ENCODE measurements at regions of chr12 and their contacts with region 1.

Region 1: GRCh38 chr12:59113831-59114615 is 193.7 kb upstream of the LRIG3 start:
- DNase-seq: peak; percentile 69
- ATAC-seq: peak; percentile 88; the same call in 1 of the 2 replicates
- H3K4me3 ChIP-seq: no peak overlapping the region
- H3K27ac ChIP-seq: no peak overlapping the region
- H3K4me1 ChIP-seq: no peaks in the 10 kb centered on the region
- H3K27me3 ChIP-seq: no peaks in the 10 kb centered on the region
- CTCF ChIP-seq: peak; percentile 89

Region 2: GRCh38 chr12:59149997-59150642 is 36.1 kb after region 1 on chr12:
- CTCF ChIA-PET with region 1: no interaction called
- POLR2A ChIA-PET with region 1: no interaction called
- in situ Hi-C with region 1: no loop called
- intact Hi-C with region 1: loop called (anchors 1 kb)
- DNase-seq: peak; percentile 71
- ATAC-seq: peak; percentile 89
- H3K4me3 ChIP-seq: no peak overlapping the region
- H3K27ac ChIP-seq: no peak overlapping the region
- H3K4me1 ChIP-seq: no peaks in the 10 kb centered on the region
- H3K27me3 ChIP-seq: no peaks in the 10 kb centered on the region
- CTCF ChIP-seq: peak; percentile 77; the same call in 1 of the 2 replicates

Measured in Panc1 (cell line).